ENCODE measurements at regions of chr6 and their contacts with region 1.

Region 1: DNA sequence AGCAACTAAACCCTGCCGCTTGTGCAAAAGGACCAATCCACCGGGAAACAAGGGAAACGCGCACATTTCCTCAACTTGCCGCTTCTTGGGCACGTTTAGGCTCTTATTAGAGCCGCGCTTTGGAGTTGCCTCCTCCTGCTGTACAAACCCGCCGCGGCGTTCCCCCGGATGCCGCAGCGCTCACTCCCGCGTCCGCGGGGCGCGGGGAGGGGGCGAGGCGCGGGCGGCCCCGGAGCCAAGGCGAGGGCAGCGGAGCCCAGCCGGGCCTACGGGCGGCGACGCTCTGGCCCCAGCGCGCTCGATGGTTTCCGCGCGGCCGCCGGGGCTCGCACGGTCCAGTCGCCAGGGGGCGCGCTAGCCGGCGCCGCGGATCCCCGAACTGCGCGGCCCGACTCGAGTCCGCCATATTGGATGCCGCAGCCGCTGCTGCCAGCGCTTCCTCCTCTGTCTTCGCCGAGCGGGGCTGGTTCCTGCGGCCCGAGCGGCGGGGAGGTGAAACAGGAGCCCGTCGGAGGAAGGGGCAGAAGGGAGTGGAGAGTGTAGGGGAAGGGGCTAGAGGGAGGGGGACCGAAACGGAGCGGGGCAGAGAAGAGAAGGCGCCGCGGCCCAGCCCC is at the start of gene SCAF8:
- DNase-seq: peak; percentile 85
- H3K4me3 Mint-ChIP-seq: peak within 1 kb of the TSS; percentile 97
- H3K27ac Mint-ChIP-seq: peak within 1 kb of the TSS; percentile 96
- H3K4me1 Mint-ChIP-seq: peaks cover 33% of the 10 kb centered on the region
- H3K27me3 Mint-ChIP-seq: peaks cover 4% of the 10 kb centered on the region
- total RNA-seq, gene SCAF8: 37.7 and 40.9 TPM in 2 replicates

Region 2: DNA sequence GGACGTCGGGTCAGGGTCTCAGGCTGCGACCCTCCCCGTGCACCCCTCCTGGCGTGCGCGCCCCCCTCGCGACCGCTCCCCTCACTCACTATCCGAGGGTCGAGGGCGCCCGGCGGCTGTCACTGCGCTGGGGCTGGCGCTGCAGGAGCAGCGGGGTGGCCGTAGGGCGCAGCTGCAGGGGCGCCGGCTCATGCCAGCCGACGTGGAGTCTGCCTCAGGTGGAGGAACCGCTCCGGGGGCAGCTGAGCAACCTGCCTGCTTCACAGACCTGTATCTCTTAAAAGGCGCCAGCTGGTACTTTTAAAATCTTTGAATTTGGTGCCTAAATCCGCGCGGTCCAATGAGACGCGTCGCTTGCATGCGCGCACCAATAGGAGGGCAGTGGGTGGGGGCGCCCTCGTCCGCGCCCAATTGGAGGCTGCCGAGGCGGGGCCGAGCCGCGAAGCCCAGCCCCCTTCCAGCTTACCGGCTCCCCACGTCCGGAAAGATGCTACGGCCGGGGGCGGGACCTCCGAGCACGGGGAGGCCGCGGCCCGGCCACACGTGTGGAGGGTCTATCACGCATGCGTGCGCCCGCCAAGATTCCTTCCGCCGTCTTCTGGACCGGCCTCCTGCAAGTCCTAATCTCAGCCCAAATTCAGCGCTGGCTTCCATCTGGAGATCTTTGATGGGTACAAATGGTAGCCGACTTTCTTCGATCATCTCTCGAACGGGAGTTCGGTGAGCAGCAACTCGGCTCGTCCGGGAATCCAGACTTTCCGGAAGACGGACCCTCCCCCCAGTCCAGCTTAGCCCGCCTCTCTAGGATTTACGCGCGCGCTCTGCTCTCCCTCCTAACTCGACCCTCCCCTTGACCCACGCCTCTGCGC is 1750.1 kb before region 1 on chr6 and contains the start of gene FBXO5:
- intact Hi-C with region 1: loop called (anchors 5 kb)
- DNase-seq: peak; percentile 98
- H3K4me3 Mint-ChIP-seq: peak within 1 kb of the TSS; percentile 96
- H3K27ac Mint-ChIP-seq: peak within 1 kb of the TSS; percentile 100
- H3K4me1 Mint-ChIP-seq: peaks cover 53% of the 10 kb centered on the region
- H3K27me3 Mint-ChIP-seq: no peaks in the 10 kb centered on the region
- total RNA-seq, gene FBXO5: 29.4 and 33.2 TPM in 2 replicates

Region 3: GRCh38 chr6:154606457-154606856 is 126.7 kb before region 1 on chr6:
- intact Hi-C with region 1: loop called (anchors 5 kb)
- DNase-seq: peak; percentile 66
- H3K4me3 Mint-ChIP-seq: peak overlapping the region; percentile 65
- H3K27ac Mint-ChIP-seq: peak overlapping the region; percentile 86
- H3K4me1 Mint-ChIP-seq: peaks cover 24% of the 10 kb centered on the region
- H3K27me3 Mint-ChIP-seq: peaks cover 3% of the 10 kb centered on the region

Region 4: DNA sequence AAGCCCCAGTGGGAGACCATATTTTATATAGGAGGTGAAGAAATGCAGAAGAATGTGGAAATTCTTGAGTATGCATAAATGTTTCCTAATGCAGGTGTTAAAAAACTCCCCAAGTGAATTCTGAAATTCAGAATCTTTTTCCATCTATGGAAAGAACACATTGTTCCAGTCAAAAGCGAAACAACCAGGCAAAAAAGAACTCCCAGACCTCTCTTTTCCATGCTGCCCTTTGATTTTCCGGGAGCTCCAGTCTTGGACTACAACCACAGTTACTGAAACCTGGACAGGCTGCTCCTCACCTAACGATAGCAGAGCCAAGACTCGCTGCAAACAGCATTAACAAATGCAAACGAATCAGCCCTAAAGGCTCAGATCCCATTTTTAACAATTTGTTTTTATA is 114.0 kb before region 1 on chr6:
- intact Hi-C with region 1: no loop called
- DNase-seq: no peak
- H3K4me3 Mint-ChIP-seq: no peak overlapping the region
- H3K27ac Mint-ChIP-seq: no peak overlapping the region
- H3K4me1 Mint-ChIP-seq: no peaks in the 10 kb centered on the region
- H3K27me3 Mint-ChIP-seq: no peaks in the 10 kb centered on the region

Region 5: DNA sequence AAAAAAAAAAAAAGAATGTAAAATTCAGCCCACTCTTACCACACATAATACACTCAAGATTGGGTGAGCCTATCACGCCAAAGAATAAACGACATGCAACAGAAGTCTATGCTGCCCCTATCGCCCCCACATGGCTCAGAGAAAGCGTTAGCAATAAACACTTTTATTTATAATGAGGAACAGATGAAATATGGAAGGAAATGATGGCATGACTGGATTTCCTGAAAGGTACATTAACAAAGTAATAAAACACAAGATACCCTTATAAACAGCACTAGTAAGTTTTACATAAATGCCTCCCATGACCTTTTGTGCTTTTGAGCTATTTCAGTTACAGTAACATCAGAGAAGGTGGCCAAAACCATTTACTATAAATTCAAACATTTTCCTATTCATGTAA is 71.4 kb before region 1 on chr6:
- intact Hi-C with region 1: no loop called
- DNase-seq: no peak
- H3K4me3 Mint-ChIP-seq: no peak overlapping the region
- H3K27ac Mint-ChIP-seq: no peak overlapping the region
- H3K4me1 Mint-ChIP-seq: no peaks in the 10 kb centered on the region
- H3K27me3 Mint-ChIP-seq: peaks cover 6% of the 10 kb centered on the region

Region 6: GRCh38 chr6:154773610-154774089 is 40.5 kb after region 1 on chr6:
- intact Hi-C with region 1: loop called (anchors 1 kb)
- DNase-seq: no peak
- H3K4me3 Mint-ChIP-seq: no peak overlapping the region
- H3K27ac Mint-ChIP-seq: peak overlapping the region; percentile 48
- H3K4me1 Mint-ChIP-seq: peaks cover 39% of the 10 kb centered on the region
- H3K27me3 Mint-ChIP-seq: no peaks in the 10 kb centered on the region

Region 7: DNA sequence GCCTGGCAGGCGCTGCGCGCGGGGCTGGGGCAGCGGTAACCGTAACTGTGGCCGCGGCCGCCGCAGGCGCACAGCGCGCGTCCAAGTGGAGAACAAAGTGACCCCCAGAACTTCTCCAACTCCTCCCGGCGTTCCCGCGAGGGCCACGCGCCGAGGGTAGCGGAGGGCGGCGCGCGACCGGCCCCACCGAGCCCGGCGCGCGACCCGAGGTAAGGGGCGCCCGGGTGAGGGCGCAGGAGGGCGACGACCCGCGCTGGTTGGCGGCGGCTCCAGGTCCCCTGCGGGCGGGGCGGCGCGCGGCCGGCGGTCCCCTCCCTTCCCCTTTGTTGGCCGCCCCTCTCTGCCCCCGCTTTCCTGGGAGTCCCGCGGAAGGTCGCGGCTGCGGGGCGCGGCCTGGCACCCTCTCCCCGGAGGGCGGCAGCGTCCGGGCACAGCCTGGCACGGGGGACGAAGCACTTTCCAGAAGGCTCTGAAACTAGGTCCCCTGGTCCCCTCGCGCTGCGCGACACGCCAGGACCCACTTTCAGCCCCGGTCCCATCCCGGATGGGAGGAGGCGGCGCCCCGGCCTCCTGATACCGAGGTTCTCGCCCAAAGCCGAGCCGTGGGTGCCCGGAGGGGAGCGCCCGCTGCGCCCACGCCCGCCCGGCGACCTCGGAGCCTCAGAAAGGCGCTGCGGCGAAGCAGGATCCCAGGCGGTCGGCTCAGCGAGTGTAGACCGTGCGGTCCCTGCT is 262.3 kb after region 1 on chr6 and contains the start of gene TIAM2:
- intact Hi-C with region 1: loop called (anchors 5 kb)
- DNase-seq: peak; percentile 11
- H3K4me3 Mint-ChIP-seq: peak within 1 kb of the TSS; percentile 71
- H3K27ac Mint-ChIP-seq: peak within 1 kb of the TSS; percentile 44
- H3K4me1 Mint-ChIP-seq: peaks cover 18% of the 10 kb centered on the region
- H3K27me3 Mint-ChIP-seq: peaks cover 16% of the 10 kb centered on the region
- total RNA-seq, gene TIAM2: 90.4 and 95.6 TPM in 2 replicates